ENCODE measurements at regions of chr10 and their contacts with region 1.

Region 1: DNA sequence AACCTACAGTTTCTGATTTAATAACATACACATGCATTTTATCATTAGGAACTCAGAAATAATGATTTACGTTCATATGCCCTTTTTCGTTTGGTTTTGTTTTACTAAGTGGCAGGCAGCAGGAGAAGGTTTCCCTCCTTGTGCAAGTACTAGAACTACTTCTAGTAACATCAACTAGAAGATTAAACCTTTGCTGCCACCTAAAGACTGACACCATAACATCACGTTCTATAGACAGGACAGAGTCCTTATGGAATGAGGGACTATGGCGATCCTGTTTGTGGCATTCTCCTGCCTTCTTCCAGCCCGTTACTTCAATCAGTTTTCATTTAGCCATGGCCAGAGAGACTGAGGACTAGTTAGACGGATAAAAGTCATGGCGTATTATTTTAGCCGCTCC is 53.2 kb downstream of the GAD2 start:
- DNase-seq: peak; percentile 56
- H3K4me3 Mint-ChIP-seq: no peak overlapping the region
- H3K27ac Mint-ChIP-seq: no peak overlapping the region
- H3K4me1 Mint-ChIP-seq: no peaks in the 10 kb centered on the region
- H3K27me3 Mint-ChIP-seq: peaks cover 75% of the 10 kb centered on the region
- CTCF ChIP-seq: peak; percentile 49

Region 2: DNA sequence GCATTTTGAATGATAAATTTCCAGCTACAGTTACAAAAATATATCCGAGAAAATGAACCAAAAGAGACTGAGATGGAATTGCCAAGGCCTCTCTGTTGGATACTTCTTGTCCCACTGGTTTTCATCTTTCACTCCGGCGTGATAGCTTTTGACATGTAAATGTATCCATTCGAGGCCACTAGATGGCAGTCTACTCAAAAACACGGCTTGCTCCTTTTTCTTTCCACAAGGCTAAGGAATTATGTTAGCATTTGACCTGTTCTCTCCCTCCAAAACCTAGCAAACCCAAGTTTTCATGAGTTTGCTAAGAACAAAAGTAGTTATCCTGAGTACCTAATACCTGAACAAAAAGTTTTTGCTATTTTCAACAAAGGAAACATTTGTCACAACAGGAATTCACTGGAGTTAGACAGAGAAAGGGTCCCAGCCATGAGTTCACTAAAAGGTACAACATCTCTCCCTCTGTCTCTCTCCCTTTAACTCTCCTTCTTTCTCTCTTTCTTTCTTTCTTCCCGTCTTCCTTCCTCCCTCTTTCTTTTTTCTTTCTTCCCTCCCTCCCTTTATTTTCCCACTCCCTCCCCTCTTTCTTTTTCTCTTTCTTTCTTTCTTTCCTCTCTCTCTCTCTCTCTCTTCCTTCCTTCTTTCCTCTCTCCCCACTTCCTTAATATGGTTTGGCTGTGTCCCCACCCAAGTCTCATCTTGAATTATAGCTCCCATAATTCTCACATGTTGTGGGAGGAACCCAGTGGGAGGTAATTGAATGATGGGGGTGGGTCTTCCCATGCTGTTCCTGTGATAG is 543.6 kb before region 1 on chr10:
- CTCF ChIA-PET with region 1: interaction called, 3 read pairs
- POLR2A ChIA-PET with region 1: no interaction called
- intact Hi-C with region 1: loop called (anchors 1 kb)
- DNase-seq: peak; percentile 66
- H3K4me3 Mint-ChIP-seq: no peak overlapping the region
- H3K27ac Mint-ChIP-seq: no peak overlapping the region
- H3K4me1 Mint-ChIP-seq: no peaks in the 10 kb centered on the region
- H3K27me3 Mint-ChIP-seq: peaks cover 55% of the 10 kb centered on the region
- CTCF ChIP-seq: peak; percentile 55

Region 3: GRCh38 chr10:25758041-25758457 is 511.7 kb before region 1 on chr10:
- CTCF ChIA-PET with region 1: no interaction called
- POLR2A ChIA-PET with region 1: no interaction called
- intact Hi-C with region 1: loop called (anchors 1 kb)
- DNase-seq: peak; percentile 52
- H3K4me3 Mint-ChIP-seq: no peak overlapping the region
- H3K27ac Mint-ChIP-seq: no peak overlapping the region
- H3K4me1 Mint-ChIP-seq: no peaks in the 10 kb centered on the region
- H3K27me3 Mint-ChIP-seq: peaks cover 30% of the 10 kb centered on the region
- CTCF ChIP-seq: peak; percentile 59

Region 4: DNA sequence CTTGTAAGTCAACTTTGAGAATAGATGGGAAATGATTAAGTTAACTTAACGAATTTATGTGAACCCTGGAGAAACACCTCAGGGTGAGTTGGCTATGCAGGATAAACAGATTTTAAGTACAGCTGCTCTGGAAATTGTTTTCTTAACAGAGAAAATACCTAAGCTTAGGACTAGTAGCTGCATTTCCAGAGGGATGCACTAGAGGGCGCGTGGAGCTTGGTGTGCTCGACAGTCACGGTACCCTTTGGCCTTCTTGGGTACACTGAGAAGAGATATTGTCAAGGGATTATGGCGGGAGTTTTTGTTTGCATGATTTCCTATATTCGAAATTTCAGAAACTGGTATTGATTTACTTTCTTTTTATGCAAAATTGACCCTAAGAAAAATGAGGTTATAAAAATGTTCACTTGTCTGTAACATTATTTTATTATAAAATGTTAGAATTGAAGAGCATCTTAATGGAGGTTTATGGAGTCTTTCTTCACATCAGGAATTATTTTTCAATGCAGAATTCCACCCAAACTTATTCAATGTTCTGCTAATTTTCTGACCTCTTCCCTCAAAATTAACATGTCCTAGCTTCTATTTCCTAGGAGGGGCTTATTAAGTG is 394.1 kb before region 1 on chr10:
- CTCF ChIA-PET with region 1: interaction called, 21 read pairs
- POLR2A ChIA-PET with region 1: interaction called, 3 read pairs
- intact Hi-C with region 1: loop called (anchors 1 kb)
- DNase-seq: peak; percentile 79
- H3K4me3 Mint-ChIP-seq: no peak overlapping the region
- H3K27ac Mint-ChIP-seq: no peak overlapping the region
- H3K4me1 Mint-ChIP-seq: no peaks in the 10 kb centered on the region
- H3K27me3 Mint-ChIP-seq: peaks cover 18% of the 10 kb centered on the region
- CTCF ChIP-seq: peak; percentile 81

Region 5: DNA sequence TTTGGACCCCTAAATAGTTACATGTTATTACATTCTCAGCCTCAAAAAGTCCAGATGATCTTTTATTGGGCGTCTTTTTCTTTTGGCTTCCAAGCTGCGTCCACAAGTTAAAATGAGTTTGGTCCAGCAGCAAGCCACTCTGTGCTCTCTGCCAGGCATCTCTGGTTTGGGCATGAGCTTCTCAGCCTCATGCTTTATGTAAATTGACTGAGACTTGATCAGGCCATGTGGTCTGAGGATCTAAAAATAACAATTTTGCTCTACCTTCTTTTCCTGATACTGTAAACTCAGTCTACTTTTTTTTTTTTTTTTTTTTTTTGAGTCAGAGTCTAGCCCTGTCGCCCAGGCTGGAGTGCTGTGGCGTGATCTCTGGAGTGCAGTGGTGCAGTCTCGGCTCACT is 37.6 kb before region 1 on chr10:
- CTCF ChIA-PET with region 1: no interaction called
- POLR2A ChIA-PET with region 1: no interaction called
- intact Hi-C with region 1: no loop called
- DNase-seq: no peak
- H3K4me3 Mint-ChIP-seq: no peak overlapping the region
- H3K27ac Mint-ChIP-seq: no peak overlapping the region
- H3K4me1 Mint-ChIP-seq: no peaks in the 10 kb centered on the region
- H3K27me3 Mint-ChIP-seq: peaks cover 89% of the 10 kb centered on the region
- CTCF ChIP-seq: no peak

Region 6: DNA sequence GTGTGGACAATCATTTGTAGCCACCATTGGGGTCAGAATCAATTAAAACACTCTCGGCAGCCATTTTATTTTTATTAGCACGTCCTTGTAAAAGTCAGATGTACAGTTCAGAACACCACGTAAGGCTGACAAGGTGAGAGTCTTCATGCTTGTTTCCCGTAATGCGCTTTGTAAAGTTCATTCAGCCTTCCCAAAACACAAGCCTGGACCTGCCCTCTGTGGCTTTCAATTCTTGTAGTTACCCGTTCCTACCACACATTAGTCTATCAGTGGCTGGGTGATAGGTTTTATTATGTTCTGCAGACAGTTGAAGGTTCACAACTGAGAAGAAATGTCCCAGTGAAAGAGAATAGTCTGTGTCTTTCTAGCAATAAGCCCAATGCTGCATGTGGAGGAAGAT is 17.8 kb before region 1 on chr10:
- CTCF ChIA-PET with region 1: no interaction called
- POLR2A ChIA-PET with region 1: no interaction called
- intact Hi-C with region 1: no loop called
- DNase-seq: peak; percentile 55
- H3K4me3 Mint-ChIP-seq: no peak overlapping the region
- H3K27ac Mint-ChIP-seq: no peak overlapping the region
- H3K4me1 Mint-ChIP-seq: peaks cover 10% of the 10 kb centered on the region
- H3K27me3 Mint-ChIP-seq: peaks cover 41% of the 10 kb centered on the region
- CTCF ChIP-seq: no peak

Measured in MCF 10A (cell line).